ENCODE measurements at regions of chr22 and their contacts with region 1.

Region 1: DNA sequence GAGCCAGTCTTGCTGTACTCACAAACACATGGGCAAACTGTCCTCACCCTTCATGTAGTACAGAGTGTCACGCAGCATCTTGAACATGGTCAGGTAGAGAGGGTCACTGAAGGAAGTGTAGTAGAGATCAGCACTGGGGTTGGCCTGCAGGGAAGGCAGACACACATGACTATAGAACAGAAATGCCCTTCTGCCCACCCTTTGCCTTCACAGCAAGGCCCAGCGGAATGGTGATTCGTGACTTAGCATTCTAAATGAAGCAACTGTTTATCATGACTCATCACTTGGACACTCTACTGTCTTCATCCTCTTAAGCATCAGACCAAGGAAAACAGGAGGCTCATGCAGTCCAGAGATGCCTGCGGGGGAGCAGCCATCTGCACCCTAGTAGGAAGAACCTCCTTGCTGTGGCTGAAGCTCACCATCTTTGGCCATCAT is 33.4 kb downstream of the SERPIND1 start:
- DNase-seq: peak in 8 of 10 donors; percentile 16 to 84 (median 74)
- H3K4me3 ChIP-seq: no peak overlapping the region
- H3K27ac ChIP-seq: peak overlapping the region in 55 of 59 donors; percentile 8 to 87 (median 69)
- H3K27me3 ChIP-seq: no peaks in the 10 kb centered on the region
- CTCF ChIP-seq: no peak

Region 2: GRCh38 chr22:20877715-20878114 is 70.4 kb after region 1 on chr22:
- intact Hi-C with region 1: loop called in 1 of 2 experiments (anchors 5 kb)
- DNase-seq: peak in 3 of 10 donors; percentile 30 to 54 (median 51)
- H3K4me3 ChIP-seq: no peak overlapping the region
- H3K27ac ChIP-seq: peak overlapping the region in 48 of 59 donors; percentile 1 to 90 (median 60)
- H3K27me3 ChIP-seq: no peaks in the 10 kb centered on the region
- CTCF ChIP-seq: no peak

Measured in dorsolateral prefrontal cortex (tissue), 120 donors.